Psoas muscle (tissue), 8 donors: ENCODE measurements at regions of chr1 and their contacts with region 1.

Region 1: DNA sequence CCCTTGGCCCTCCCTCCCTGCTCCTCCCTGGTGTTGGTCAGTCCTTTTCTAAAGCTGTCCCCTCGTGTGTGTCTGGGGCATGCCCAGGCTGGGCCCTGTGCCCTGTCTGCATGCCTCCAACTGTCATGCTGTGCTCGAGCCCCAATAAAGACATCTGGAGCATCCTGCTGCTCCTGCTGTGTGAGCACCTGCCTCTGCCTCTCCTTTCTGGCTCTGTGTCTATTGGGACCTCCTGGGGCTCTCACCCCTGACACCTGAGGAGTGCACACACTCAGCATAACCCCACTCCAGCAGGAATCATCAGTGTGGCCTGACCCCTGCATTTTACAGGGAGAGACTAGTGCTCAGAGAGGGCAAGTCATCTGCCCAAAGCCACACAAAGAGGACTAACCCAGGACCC is 23.7 kb downstream of the KCNC4 start:
- DNase-seq: no peak
- ATAC-seq: no peak
- H3K4me3 ChIP-seq: no peak overlapping the region
- H3K27ac ChIP-seq: no peak overlapping the region
- H3K4me1 ChIP-seq: no peaks in the 10 kb centered on the region
- H3K27me3 ChIP-seq: no peaks in the 10 kb centered on the region
- CTCF ChIP-seq: no peak

Region 2: DNA sequence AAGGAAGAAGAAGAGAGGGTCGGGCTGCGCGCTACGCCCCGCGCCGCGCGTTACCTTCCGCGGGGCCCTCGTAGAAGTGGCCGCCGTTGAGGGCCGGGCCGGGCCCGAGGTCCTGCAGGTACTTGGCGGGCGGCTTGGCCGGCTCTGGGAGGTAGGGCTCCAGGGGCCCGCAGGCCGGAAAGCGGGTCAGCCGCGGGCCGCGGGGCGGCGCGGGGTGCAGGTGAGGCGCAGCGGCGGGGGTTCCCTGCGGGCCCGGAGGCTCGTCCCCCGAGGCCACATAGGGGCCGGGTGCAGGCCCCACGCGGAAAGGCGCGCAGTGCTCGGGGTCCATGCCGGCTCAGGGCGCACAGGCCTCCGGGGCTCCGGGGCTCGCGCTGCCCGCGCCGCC is 163.6 kb before region 1 on chr1:
- intact Hi-C with region 1: no loop called
- DNase-seq: peak in 1 of 2 donors; percentile 36
- ATAC-seq: no peak
- H3K4me3 ChIP-seq: peak overlapping the region; percentile 39
- H3K27ac ChIP-seq: no peak overlapping the region
- H3K4me1 ChIP-seq: peaks cover 11% of the 10 kb centered on the region
- H3K27me3 ChIP-seq: peaks cover 0 to 61% (median 39%) of the 10 kb centered on the region in 3 donors
- CTCF ChIP-seq: no peak

Region 3: GRCh38 chr1:110209715-110210603 is 23.9 kb before region 1 on chr1 and contains the start of gene KCNC4:
- intact Hi-C with region 1: no loop called
- DNase-seq: peak; percentile 91 to 93
- ATAC-seq: peak; percentile 78 to 87 (median 84)
- H3K4me3 ChIP-seq: peak within 1 kb of the TSS; percentile 72
- H3K27ac ChIP-seq: peak within 1 kb of the TSS; percentile 67
- H3K4me1 ChIP-seq: no peaks in the 10 kb centered on the region
- H3K27me3 ChIP-seq: peaks cover 0 to 18% (median 3%) of the 10 kb centered on the region in 3 donors
- CTCF ChIP-seq: no peak
- total RNA-seq, gene KCNC4: 5.1 to 14.5 (median 5.9) TPM

Region 4: DNA sequence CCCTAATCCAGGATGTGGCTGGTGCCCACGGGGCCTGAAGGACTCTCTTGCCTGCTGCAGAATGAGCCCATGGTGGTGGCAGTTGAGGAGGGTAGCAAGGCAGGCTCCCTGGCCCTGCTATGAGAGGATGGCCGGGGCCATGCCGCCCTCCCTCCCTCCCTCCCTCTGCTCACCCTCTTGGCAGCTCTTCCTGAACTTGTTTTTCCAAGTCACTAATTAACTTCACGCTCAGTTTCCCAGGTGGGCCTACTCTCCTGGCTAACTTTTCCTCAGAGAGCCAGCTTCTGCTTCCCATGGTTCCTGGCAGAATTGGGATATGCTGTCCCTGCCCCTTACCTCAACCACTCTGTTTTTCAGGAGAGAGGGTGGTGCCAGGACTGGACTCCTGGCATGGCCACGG is 13.5 kb before region 1 on chr1:
- intact Hi-C with region 1: no loop called
- DNase-seq: no peak
- ATAC-seq: no peak
- H3K4me3 ChIP-seq: no peak overlapping the region
- H3K27ac ChIP-seq: no peak overlapping the region
- H3K4me1 ChIP-seq: no peaks in the 10 kb centered on the region
- H3K27me3 ChIP-seq: no peaks in the 10 kb centered on the region
- CTCF ChIP-seq: no peak

Region 5: DNA sequence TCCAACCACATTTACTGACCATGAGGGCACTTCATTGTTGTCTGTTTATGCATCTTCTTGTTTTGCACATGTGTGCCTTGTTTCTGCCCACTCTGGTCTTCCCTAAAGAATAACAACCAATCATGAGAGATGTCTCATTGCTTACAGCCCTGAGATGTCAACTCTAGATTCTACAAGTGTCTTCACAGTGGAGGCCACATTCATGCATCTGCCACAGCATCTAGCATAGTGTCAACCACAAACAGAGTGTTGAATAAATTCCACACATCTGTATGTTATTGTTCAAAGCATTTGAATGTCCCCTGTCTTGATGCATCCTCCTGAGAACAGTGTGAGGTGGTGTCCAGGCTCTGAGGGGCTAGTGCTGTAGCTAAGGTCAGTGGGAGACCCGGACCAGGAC is 19.4 kb after region 1 on chr1:
- intact Hi-C with region 1: loop called in 1 of 2 experiments (anchors 2 kb)
- DNase-seq: no peak
- ATAC-seq: no peak
- H3K4me3 ChIP-seq: no peak overlapping the region
- H3K27ac ChIP-seq: no peak overlapping the region
- H3K4me1 ChIP-seq: no peaks in the 10 kb centered on the region
- H3K27me3 ChIP-seq: no peaks in the 10 kb centered on the region
- CTCF ChIP-seq: no peak